ENCODE measurements at regions of chr1 and their contacts with region 1.

Region 1: GRCh38 chr1:67051196-67051595 is 2.8 kb downstream of the SLC35D1 start:
- DNase-seq: no peak
- ATAC-seq: no peak
- H3K4me3 Mint-ChIP-seq: peak overlapping the region; percentile 25
- H3K27ac Mint-ChIP-seq: peak overlapping the region; percentile 14
- H3K4me1 Mint-ChIP-seq: peaks cover 29% of the 10 kb centered on the region
- H3K27me3 Mint-ChIP-seq: no peaks in the 10 kb centered on the region

Region 2: GRCh38 chr1:66996018-66996682 is 55.0 kb before region 1 on chr1:
- CTCF ChIA-PET with region 1: interaction called, 10 read pairs
- DNase-seq: peak; percentile 76
- ATAC-seq: peak; percentile 71
- H3K4me3 Mint-ChIP-seq: no peak overlapping the region
- H3K27ac Mint-ChIP-seq: no peak overlapping the region
- H3K4me1 Mint-ChIP-seq: peaks cover 14% of the 10 kb centered on the region
- H3K27me3 Mint-ChIP-seq: no peaks in the 10 kb centered on the region

Region 3: DNA sequence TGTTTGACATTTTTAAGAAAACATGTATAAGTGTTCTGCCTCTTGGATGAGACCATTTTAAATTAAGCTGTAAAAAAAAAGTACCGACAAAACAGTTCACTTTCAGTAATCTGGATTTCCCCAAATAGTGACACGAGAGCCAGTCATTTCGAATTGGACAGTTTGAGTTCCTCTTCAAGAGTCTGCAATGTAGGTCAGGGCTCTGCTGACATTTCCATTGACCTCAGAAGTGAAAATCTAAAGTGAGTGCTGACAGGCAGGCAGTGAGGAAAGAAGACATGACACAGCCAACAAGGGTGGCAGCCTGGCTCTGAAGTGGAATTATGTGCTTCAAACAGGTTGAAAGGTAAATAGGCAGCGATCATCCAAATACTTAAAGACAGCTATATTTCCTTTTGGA is 115.0 kb after region 1 on chr1 and contains the start of gene IL23R:
- CTCF ChIA-PET with region 1: no interaction called
- DNase-seq: peak; percentile 56
- ATAC-seq: peak; percentile 32
- H3K4me3 Mint-ChIP-seq: no peak within 1 kb of the TSS
- H3K27ac Mint-ChIP-seq: peak within 1 kb of the TSS; percentile 27
- H3K4me1 Mint-ChIP-seq: peaks cover 47% of the 10 kb centered on the region
- H3K27me3 Mint-ChIP-seq: peaks cover 16% of the 10 kb centered on the region
- total RNA-seq, gene IL23R: 0.53 to 2.2 TPM